Activated CD4-positive, alpha-beta T cell treated with anti-CD3 and anti-CD28 coated beads, Interleukin-2, amount 10 ng/mL, durations not matched to agents 7 days and 5 days (primary cell): ENCODE measurements at regions of chr11 and their contacts with region 1.

Region 1: GRCh38 chr11:62542750-62543567 is 3.6 kb downstream of the AHNAK start:
- DNase-seq: peak; percentile 75
- H3K4me3 Mint-ChIP-seq: peak overlapping the region; percentile 98
- H3K27ac Mint-ChIP-seq: peak overlapping the region; percentile 80
- H3K4me1 Mint-ChIP-seq: peaks cover 76% of the 10 kb centered on the region
- H3K27me3 Mint-ChIP-seq: peaks cover 6% of the 10 kb centered on the region

Region 2: GRCh38 chr11:62315431-62315830 is 227.5 kb before region 1 on chr11:
- CTCF ChIA-PET with region 1: no interaction called
- POLR2A ChIA-PET with region 1: no interaction called
- DNase-seq: no peak
- H3K4me3 Mint-ChIP-seq: no peak overlapping the region
- H3K27ac Mint-ChIP-seq: no peak overlapping the region
- H3K4me1 Mint-ChIP-seq: peaks cover 9% of the 10 kb centered on the region
- H3K27me3 Mint-ChIP-seq: peaks cover 22% of the 10 kb centered on the region

Region 3: GRCh38 chr11:62394825-62395538 is 148.0 kb before region 1 on chr11:
- CTCF ChIA-PET with region 1: interaction called, 19 read pairs
- POLR2A ChIA-PET with region 1: no interaction called
- DNase-seq: peak; percentile 71
- H3K4me3 Mint-ChIP-seq: no peak overlapping the region
- H3K27ac Mint-ChIP-seq: no peak overlapping the region
- H3K4me1 Mint-ChIP-seq: peaks cover 22% of the 10 kb centered on the region
- H3K27me3 Mint-ChIP-seq: peaks cover 4% of the 10 kb centered on the region

Region 4: GRCh38 chr11:62419314-62419929 is 123.5 kb before region 1 on chr11:
- CTCF ChIA-PET with region 1: interaction called, 82 read pairs
- POLR2A ChIA-PET with region 1: no interaction called
- DNase-seq: no peak
- H3K4me3 Mint-ChIP-seq: no peak overlapping the region
- H3K27ac Mint-ChIP-seq: peak overlapping the region; percentile 60
- H3K4me1 Mint-ChIP-seq: peaks cover 2% of the 10 kb centered on the region
- H3K27me3 Mint-ChIP-seq: peaks cover 13% of the 10 kb centered on the region

Region 5: DNA sequence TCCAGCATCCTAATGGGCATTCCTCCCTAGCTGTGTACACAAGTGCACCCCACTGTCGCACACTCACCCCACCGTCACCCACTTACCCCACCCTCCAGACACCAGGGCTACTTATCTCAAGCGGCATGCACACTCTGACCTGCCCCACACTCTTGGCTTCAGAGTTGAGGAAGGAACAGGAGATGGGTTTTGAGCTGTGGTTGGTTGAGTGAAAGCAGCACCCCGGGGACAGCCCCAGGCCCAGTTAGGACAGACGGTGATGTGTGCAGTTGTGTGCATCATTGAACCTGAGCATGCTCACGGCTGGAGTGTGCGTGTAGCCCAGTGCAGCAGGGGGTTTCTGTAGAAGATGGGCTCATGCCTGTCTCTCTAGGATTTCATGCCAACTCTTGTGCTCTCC is 28.8 kb before region 1 on chr11:
- CTCF ChIA-PET with region 1: interaction called, 11 read pairs
- POLR2A ChIA-PET with region 1: no interaction called
- DNase-seq: no peak
- H3K4me3 Mint-ChIP-seq: no peak overlapping the region
- H3K27ac Mint-ChIP-seq: no peak overlapping the region
- H3K4me1 Mint-ChIP-seq: peaks cover 2% of the 10 kb centered on the region
- H3K27me3 Mint-ChIP-seq: no peaks in the 10 kb centered on the region

Region 6: GRCh38 chr11:62556108-62556871 is 13.3 kb after region 1 on chr11:
- CTCF ChIA-PET with region 1: interaction called, 83 read pairs
- POLR2A ChIA-PET with region 1: interaction called, 5 read pairs
- DNase-seq: peak; percentile 92
- H3K4me3 Mint-ChIP-seq: peak overlapping the region; percentile 75
- H3K27ac Mint-ChIP-seq: peak overlapping the region; percentile 99
- H3K4me1 Mint-ChIP-seq: peaks cover 95% of the 10 kb centered on the region
- H3K27me3 Mint-ChIP-seq: no peaks in the 10 kb centered on the region

Region 7: DNA sequence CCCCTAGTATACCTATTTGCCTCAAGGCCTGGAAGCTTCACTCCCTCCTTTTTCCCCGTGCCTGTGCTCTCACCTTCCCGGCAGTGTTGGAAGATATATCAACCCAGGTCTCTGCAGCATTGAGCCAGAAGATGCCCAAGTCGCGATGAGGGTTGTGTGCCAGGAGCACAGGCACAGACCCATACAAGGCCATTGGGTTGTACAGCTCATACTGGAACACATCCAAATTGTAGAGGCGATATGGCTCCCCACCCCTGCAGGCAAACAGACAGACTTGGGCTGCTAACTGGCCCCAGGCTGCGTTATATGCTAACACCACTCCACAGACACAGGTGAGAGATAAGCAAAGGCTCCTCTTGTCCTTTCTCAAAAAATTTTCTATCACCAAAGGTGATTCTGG is 89.5 kb after region 1 on chr11:
- CTCF ChIA-PET with region 1: no interaction called
- POLR2A ChIA-PET with region 1: no interaction called
- DNase-seq: no peak
- H3K4me3 Mint-ChIP-seq: no peak overlapping the region
- H3K27ac Mint-ChIP-seq: peak overlapping the region; percentile 69
- H3K4me1 Mint-ChIP-seq: peaks cover 22% of the 10 kb centered on the region
- H3K27me3 Mint-ChIP-seq: no peaks in the 10 kb centered on the region